ENCODE measurements at regions of chr10 and their contacts with region 1.

Region 1: GRCh38 chr10:29011516-29011915 is 277.4 kb upstream of the LYZL1 start:
- DNase-seq: no peak
- ATAC-seq: no peak

Region 2: GRCh38 chr10:28505359-28505959 is 506.1 kb before region 1 on chr10:
- intact Hi-C with region 1: no loop called
- DNase-seq: no peak
- ATAC-seq: no peak

Region 3: GRCh38 chr10:28796606-28797512 is 214.7 kb before region 1 on chr10:
- intact Hi-C with region 1: no loop called
- DNase-seq: peak; percentile 80
- ATAC-seq: peak; percentile 67 to 93

Region 4: DNA sequence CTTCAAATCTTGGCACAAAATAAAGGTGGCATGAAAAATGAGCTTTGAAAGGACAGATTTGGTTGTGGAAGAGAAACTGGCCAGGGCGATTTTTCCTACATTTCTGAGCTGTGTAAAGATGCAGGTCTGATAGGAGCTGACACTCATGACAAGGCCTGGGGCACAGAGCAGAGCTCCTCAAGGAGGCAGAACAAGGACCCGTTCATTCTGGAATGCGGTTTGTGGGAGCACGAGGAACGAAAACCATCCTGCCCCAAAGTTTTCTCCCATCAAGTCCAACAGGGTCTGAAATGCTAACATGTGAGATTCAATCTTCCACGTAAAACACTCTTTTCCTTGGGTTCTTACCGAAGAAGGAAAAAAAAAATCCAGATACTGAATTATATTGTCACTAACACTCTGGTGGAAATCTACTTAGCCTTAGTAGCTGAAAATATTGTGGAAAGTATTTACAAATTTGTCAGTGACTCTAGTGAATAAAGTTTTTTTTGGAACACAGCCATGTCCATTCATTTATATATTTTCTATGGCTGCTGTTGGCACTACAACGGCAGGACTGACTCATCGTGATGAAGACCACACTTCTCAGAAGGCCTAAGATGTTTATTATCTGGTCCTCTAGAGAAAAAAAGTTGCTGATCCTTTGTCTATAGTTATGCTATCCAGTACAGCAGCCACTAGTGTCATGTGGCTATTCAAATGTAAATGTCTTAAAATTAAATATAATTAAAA is 118.5 kb before region 1 on chr10:
- intact Hi-C with region 1: no loop called
- DNase-seq: no peak
- ATAC-seq: no peak

Region 5: DNA sequence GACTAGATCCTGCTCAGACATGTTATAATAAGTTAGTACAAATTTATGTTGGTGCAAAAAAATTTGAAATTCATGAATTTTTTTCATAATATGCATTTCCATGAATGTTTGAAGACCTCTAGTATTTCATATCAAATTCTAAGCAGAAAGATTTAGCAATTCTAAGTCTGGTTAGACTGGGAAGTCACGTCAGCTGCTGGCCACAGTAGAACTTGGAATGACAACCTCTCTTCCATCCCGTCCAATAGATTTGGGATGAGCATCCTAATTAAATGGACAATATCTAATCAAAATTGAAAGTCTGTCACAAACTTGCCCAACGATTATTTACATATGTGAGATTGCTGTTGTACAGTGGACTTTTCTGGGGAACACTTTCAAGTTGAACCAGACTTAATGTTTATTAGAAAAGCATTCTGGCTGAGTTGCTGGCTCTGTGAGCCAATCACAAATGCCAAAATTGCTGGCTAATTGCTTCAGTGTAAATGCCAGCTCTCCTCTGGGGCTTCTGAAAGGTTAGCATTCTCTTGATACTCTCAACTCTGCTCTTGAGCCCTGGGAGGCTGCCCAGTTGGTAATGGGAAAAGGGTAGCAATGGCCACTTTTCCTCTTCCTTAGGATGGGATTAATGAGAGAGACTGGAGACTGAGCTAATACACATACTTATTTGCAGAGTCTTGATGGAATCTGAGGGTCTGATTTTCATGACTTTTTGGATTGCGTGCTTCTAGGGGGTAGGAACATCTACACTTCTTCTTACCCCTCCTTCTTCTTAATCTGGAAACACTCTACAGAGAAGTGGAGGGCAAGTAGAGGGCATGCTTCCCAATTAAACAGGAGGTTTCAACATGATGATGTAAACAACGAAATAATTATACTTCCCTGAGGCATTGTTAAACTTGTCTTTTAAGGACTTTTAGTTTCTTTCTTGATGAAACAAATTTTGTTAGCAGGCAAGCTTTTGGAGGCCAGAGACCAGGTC is 80.7 kb before region 1 on chr10:
- intact Hi-C with region 1: no loop called
- DNase-seq: peak; percentile 39
- ATAC-seq: peak; percentile 24 to 87

Region 6: DNA sequence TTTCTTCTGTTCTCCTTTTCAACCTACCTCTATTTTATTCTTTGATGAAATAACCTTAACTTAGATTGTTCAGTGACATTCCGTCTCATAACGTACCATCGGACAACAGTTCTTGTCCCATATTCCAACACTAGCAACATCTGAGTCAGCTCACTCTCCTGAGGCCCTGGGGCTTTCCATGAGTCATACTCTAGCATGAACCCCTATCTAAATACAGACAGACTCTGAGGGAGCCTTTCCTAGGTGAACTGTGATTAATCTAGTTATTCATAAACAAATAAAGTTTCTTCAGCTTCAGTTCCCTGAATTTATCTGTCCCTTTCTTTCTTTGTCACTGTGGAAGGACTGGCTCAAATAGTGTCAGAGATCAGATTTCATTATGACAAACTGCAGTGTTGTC is 108.7 kb after region 1 on chr10:
- intact Hi-C with region 1: loop called in 1 of 2 experiments (anchors 10 kb)
- DNase-seq: no peak
- ATAC-seq: peak in 1 of 2 donors; percentile 46